Activated B cell treated with CpG ODN at 0.5 μM for 24 hours (primary cell): ENCODE measurements at regions of chr15 and their contacts with region 1.

Region 1: DNA sequence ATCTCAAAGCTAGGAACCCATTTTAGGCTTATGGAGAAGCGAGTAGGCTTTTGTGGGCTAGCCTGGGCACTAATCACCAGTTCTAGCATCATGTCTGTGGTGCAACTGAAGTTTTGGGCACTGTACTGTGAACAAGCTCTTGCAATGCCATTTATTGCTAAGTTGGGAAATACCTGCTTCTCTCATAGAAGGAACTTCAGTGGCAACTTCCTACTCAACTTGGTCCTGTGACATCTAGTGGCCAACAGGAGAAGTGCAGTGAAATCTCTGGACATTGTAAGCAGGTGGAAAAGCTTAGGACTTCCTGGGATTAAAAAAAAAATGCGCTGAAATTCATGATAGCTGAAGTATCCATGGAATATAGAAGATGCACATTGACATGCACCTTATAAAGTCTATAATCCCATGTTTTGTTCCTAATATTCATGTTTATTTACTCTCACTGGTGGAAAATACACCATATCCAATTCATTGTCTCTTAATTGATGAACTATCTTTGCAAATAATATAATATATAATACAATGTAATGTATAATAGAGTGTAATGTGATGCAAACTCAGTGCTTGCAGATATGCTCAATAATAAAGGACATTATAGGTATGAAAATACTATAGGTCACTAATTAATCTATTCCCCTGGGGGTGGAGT is 6.5 kb upstream of the ALDH1A3 start:
- DNase-seq: no peak
- ATAC-seq: peak; percentile 71
- H3K4me3 Mint-ChIP-seq: no peak overlapping the region
- H3K27ac Mint-ChIP-seq: no peak overlapping the region
- H3K4me1 Mint-ChIP-seq: no peaks in the 10 kb centered on the region
- H3K27me3 Mint-ChIP-seq: peaks cover 28% of the 10 kb centered on the region
- CTCF ChIP-seq: peak; percentile 60

Region 2: GRCh38 chr15:100349696-100350433 is 523.3 kb before region 1 on chr15:
- CTCF ChIA-PET with region 1: no interaction called
- POLR2A ChIA-PET with region 1: no interaction called
- intact Hi-C with region 1: loop called (anchors 10 kb)
- DNase-seq: peak; percentile 69
- ATAC-seq: peak; percentile 92
- H3K4me3 Mint-ChIP-seq: peak overlapping the region; percentile 90
- H3K27ac Mint-ChIP-seq: peak overlapping the region; percentile 46
- H3K4me1 Mint-ChIP-seq: peaks cover 10% of the 10 kb centered on the region
- H3K27me3 Mint-ChIP-seq: peaks cover 10% of the 10 kb centered on the region
- CTCF ChIP-seq: peak; percentile 19

Region 3: GRCh38 chr15:100627789-100628395 is 245.3 kb before region 1 on chr15:
- CTCF ChIA-PET with region 1: interaction called, 5 read pairs
- POLR2A ChIA-PET with region 1: no interaction called
- intact Hi-C with region 1: loop called (anchors 1 kb)
- DNase-seq: no peak
- ATAC-seq: peak; percentile 79
- H3K4me3 Mint-ChIP-seq: no peak overlapping the region
- H3K27ac Mint-ChIP-seq: no peak overlapping the region
- H3K4me1 Mint-ChIP-seq: peaks cover 4% of the 10 kb centered on the region
- H3K27me3 Mint-ChIP-seq: no peaks in the 10 kb centered on the region
- CTCF ChIP-seq: peak; percentile 84

Region 4: GRCh38 chr15:100849252-100850171 is 23.6 kb before region 1 on chr15:
- CTCF ChIA-PET with region 1: interaction called, 3 read pairs
- POLR2A ChIA-PET with region 1: no interaction called
- intact Hi-C with region 1: loop called (anchors 2 kb)
- DNase-seq: peak; percentile 51
- ATAC-seq: peak; percentile 95
- H3K4me3 Mint-ChIP-seq: peak overlapping the region; percentile 81
- H3K27ac Mint-ChIP-seq: no peak overlapping the region
- H3K4me1 Mint-ChIP-seq: peaks cover 5% of the 10 kb centered on the region
- H3K27me3 Mint-ChIP-seq: peaks cover 31% of the 10 kb centered on the region
- CTCF ChIP-seq: no peak

Region 5: DNA sequence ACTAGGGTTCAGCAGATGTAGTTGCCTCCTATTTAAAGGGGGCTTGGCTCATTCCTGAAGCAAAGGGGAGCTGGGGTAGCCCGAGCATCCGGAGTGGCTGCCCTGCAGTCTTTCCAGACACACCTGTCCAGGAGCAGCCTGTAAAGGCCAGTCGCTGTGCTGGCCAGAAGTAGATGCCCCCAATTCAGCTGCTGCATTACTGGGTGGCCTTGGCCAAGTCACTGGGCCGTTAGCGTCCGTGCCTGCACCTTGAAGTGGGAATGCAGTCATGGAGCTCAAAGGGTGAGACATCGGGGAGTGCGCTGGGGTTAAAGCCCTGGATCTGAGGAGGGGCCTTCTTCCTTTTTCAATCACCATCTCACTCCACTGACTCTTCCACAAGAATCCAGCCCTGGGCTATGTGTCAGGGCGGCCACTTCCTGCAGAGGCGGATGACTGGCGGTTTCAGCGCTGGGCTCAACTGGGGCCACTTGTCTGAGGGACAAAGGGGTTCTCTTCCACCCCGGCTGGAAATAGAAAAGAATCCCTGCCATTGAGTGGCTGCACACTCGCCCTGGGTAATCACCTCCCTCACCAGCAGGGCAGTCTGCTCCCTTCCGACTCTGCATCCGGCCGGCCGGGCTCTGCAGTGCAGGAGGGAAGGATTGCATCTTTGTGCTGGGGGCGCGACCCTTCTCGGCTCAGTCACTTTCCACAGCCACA is 18.3 kb after region 1 on chr15:
- CTCF ChIA-PET with region 1: no interaction called
- POLR2A ChIA-PET with region 1: no interaction called
- intact Hi-C with region 1: no loop called
- DNase-seq: no peak
- ATAC-seq: no peak
- H3K4me3 Mint-ChIP-seq: no peak overlapping the region
- H3K27ac Mint-ChIP-seq: no peak overlapping the region
- H3K4me1 Mint-ChIP-seq: no peaks in the 10 kb centered on the region
- H3K27me3 Mint-ChIP-seq: peaks cover 57% of the 10 kb centered on the region
- CTCF ChIP-seq: no peak